AG04449 (cell line): ENCODE measurements at regions of chr12 and their contacts with region 1.

Region 1: DNA sequence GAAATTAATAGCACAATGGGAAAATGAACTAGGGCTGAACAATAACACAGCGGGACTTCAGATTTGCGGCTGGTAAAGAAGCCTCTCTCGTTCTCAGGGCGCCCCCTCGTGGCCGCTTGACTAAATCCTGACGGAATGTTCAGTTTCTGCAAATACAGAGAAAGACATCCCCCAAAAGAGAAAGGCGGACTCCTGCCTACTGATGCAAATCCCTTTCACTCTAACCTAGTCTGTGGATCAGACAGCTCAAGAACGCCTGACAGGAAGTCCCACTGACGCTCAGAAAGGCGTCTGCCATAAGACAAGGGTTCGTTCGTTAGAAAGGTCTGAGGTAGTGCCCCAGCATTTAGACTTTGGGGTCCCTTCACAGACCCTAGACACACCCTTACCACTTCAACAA is 2.5 kb downstream of the NUAK1 start:
- DNase-seq: peak; percentile 70
- H3K4me3 ChIP-seq: peak overlapping the region; percentile 89
- CTCF ChIP-seq: peak; percentile 74

Region 2: GRCh38 chr12:105705765-105706164 is 430.5 kb before region 1 on chr12:
- CTCF ChIA-PET with region 1: interaction called, 34 read pairs
- POLR2A ChIA-PET with region 1: interaction called, 3 read pairs
- DNase-seq: no peak
- H3K4me3 ChIP-seq: no peak overlapping the region
- CTCF ChIP-seq: peak; percentile 62

Region 3: GRCh38 chr12:105922670-105923102 is 213.6 kb before region 1 on chr12:
- CTCF ChIA-PET with region 1: interaction called, 13 read pairs
- POLR2A ChIA-PET with region 1: interaction called, 3 read pairs
- DNase-seq: peak; percentile 77
- H3K4me3 ChIP-seq: no peak overlapping the region
- CTCF ChIP-seq: no peak

Region 4: DNA sequence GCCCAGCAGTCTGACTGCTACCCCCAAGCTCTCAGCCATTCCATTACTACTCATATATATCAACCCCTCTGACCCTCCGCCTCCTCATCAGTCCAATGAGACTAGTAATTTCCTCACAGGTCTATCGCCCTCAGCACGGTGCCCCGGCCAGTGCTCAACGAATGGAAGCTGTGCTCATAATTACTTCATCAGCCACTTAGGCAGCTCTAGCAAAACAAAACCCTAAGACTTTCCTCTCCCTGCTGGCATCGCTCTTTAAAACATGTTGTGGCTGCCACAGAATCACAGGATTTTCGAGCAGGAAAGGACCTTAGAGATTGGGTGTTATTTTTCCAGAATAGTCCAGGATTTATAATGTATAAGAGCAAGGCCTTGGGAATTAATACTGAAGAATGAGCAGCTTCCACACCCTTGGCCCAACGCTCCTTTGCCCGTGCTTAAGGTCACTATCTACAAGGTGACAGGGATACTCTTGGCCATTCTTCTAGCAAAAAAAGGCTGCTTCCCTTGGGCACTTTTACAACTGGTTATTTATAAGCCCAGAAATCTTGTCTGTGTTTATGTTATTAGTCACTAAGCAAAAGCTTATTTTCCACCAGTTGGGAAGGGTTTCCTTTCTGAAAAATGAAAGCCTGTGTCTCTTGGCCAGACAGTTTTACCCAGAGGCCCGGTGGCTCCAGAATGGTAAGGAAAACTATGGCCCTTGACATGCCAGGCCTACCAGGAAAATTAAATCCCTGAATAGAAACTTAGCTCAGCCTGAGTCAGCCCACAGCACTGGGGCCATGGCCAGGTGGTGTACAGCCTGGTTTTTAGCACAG is 45.5 kb before region 1 on chr12:
- CTCF ChIA-PET with region 1: interaction called, 15 read pairs
- POLR2A ChIA-PET with region 1: interaction called, 6 read pairs
- DNase-seq: peak; percentile 80
- H3K4me3 ChIP-seq: no peak overlapping the region
- CTCF ChIP-seq: no peak

Region 5: GRCh38 chr12:106123551-106124081 is 12.6 kb before region 1 on chr12:
- CTCF ChIA-PET with region 1: interaction called, 23 read pairs
- POLR2A ChIA-PET with region 1: interaction called, 4 read pairs
- DNase-seq: no peak
- H3K4me3 ChIP-seq: no peak overlapping the region
- CTCF ChIP-seq: no peak